ENCODE measurements at regions of chr12 and their contacts with region 1.

Region 1: DNA sequence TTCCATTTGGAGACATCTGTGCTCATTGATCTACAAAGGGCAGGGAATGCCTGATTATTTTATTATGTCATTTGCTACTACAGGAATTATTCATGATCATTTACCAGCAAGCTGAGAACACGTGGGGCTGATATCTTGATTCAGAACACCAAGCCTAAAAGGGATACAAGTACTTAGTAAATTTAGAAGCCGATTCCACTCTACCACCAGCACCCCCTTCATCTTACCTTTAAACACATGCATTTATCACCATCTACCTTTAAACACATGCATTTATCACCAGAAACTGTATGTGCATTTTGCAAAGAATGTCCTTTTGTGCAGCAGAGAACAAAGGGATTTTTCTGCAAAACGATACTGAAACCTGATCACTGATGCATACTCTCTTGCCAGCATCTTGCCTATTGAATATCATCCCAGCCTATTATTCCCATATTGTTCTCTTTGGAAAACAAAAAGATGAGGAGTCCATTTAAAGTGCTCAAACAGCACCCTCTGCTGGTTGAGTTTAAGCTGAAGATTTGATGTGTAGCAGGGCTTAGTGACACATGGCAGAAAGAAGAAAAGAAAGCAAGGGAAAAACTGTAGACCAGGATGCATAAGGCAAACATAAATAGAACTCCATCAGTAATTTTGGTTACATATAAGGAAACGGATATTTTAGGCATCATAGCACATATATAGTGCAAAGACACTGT is 132.6 kb upstream of the PLEKHG7 start:
- DNase-seq: peak; percentile 75
- ATAC-seq: peak; percentile 72
- H3K4me3 ChIP-seq: no peak overlapping the region
- H3K27ac ChIP-seq: no peak overlapping the region
- H3K4me1 ChIP-seq: no peaks in the 10 kb centered on the region
- H3K27me3 ChIP-seq: no peaks in the 10 kb centered on the region
- CTCF ChIP-seq: peak; percentile 58 to 86 (median 81); a peak in 5 of 6 replicates
- POLR2A ChIP-seq: no peak
- RAD21 ChIP-seq: peak; percentile 92

Region 2: GRCh38 chr12:91577586-91578539 is 992.3 kb before region 1 on chr12:
- CTCF ChIA-PET with region 1: no interaction called
- POLR2A ChIA-PET with region 1: no interaction called
- RAD21 ChIA-PET with region 1: no interaction called
- intact Hi-C with region 1: loop called (anchors 10 kb)
- DNase-seq: peak; percentile 15
- ATAC-seq: peak; percentile 73
- H3K4me3 ChIP-seq: peak overlapping the region; percentile 27 to 41
- H3K27ac ChIP-seq: no peak overlapping the region
- H3K4me1 ChIP-seq: 0 out of 4 replicates have a peak, but pooled peaks cover 0 to 4% of the 10 kb centered on the region in 2 experiments
- H3K27me3 ChIP-seq: no peaks in the 10 kb centered on the region
- CTCF ChIP-seq: peak; percentile 23 to 63 (median 34); a peak in 3 of 6 replicates
- POLR2A ChIP-seq: no peak
- RAD21 ChIP-seq: peak; percentile 51

Region 3: DNA sequence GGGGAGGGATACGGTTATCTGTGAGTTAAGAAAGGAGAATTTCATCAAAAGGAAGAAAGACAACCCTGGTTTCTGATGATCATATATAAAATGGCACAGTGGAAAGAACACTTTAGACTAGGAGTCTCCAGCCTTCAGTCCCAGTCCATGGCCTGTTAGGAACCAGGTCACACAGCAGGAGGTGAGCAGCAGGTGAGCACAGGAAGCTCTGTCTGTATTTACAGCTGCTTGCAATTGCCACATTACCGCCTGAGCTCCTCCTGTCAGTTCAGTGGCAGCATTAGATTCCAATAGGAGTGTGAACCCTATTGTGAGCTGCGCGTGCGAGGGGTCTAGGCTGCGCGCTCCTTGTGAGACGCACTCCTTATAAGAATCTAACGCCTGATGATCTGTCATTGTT is 562.4 kb before region 1 on chr12:
- CTCF ChIA-PET with region 1: no interaction called
- POLR2A ChIA-PET with region 1: no interaction called
- RAD21 ChIA-PET with region 1: no interaction called
- intact Hi-C with region 1: loop called (anchors 2 kb)
- DNase-seq: no peak
- ATAC-seq: no peak
- H3K4me3 ChIP-seq: no peak overlapping the region
- H3K27ac ChIP-seq: no peak overlapping the region
- H3K4me1 ChIP-seq: no peaks in the 10 kb centered on the region
- H3K27me3 ChIP-seq: no peaks in the 10 kb centered on the region
- CTCF ChIP-seq: no peak
- POLR2A ChIP-seq: no peak
- RAD21 ChIP-seq: no peak

Region 4: GRCh38 chr12:92502417-92503028 is 67.7 kb before region 1 on chr12:
- CTCF ChIA-PET with region 1: interaction called, 3 read pairs
- POLR2A ChIA-PET with region 1: no interaction called
- RAD21 ChIA-PET with region 1: no interaction called
- intact Hi-C with region 1: loop called (anchors 1 kb)
- DNase-seq: no peak
- ATAC-seq: 0 out of 2 replicates have a peak, but pooled peaks have one; percentile 50
- H3K4me3 ChIP-seq: no peak overlapping the region
- H3K27ac ChIP-seq: no peak overlapping the region
- H3K4me1 ChIP-seq: no peaks in the 10 kb centered on the region
- H3K27me3 ChIP-seq: no peaks in the 10 kb centered on the region
- CTCF ChIP-seq: 0 out of 6 replicates have a peak, but pooled peaks of 2 of the 3 experiments have one; percentile 11 to 13
- POLR2A ChIP-seq: no peak
- RAD21 ChIP-seq: peak; percentile 36; the same call in 1 of the 2 replicates

Measured in HCT116 (cell line).